AG04450 (cell line): ENCODE measurements at regions of chr20 and their contacts with region 1.

Region 1: DNA sequence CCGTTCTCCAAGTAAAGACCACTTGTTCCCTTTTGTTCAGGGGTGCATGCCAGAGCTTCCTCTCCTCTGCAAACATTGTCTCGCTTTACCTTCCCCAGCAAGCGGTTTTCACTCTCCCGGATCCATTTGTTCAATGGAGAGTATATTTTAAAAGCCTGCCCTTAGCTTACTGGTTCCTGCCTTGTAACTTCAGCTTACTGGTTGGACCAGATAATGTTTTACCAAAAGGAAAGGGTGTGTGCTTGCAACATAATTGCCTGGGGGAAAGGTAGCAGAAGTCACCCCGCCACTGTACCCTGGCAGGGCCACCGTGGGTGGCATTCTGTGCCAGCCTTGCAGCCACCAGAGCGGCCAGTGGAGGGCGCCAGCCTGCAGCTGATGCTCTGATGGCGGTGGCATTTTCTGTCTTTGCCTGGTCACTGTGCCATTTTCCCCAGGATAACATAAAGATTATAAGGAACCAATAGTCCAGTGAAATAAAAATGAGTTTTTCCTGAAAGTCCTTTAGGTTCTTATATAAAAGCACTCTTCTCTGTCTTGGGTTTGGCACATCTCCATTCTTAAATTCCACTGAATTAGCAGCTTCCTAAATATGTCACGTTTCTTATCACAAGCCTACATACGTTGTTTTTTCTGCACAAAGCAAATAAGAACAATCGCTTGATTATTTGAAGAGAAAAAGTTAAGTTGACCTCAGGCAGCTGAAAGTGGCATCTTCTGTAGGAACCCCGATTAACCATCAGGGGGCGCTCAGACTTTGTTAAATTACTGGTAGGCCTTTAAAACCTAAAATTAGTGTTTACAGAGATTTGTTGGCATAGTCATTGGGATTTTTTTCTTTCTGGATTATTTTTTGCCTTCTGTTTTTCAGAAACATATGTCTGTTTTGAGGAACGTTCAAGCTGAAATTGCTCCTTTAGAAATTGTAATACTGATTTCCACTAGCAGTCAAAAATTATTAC is 67.4 kb upstream of the XRN2 start:
- DNase-seq: peak; percentile 32
- H3K4me3 ChIP-seq: no peak overlapping the region
- H3K27ac ChIP-seq: no peak overlapping the region
- H3K27me3 ChIP-seq: no peaks in the 10 kb centered on the region
- CTCF ChIP-seq: peak; percentile 77

Region 2: DNA sequence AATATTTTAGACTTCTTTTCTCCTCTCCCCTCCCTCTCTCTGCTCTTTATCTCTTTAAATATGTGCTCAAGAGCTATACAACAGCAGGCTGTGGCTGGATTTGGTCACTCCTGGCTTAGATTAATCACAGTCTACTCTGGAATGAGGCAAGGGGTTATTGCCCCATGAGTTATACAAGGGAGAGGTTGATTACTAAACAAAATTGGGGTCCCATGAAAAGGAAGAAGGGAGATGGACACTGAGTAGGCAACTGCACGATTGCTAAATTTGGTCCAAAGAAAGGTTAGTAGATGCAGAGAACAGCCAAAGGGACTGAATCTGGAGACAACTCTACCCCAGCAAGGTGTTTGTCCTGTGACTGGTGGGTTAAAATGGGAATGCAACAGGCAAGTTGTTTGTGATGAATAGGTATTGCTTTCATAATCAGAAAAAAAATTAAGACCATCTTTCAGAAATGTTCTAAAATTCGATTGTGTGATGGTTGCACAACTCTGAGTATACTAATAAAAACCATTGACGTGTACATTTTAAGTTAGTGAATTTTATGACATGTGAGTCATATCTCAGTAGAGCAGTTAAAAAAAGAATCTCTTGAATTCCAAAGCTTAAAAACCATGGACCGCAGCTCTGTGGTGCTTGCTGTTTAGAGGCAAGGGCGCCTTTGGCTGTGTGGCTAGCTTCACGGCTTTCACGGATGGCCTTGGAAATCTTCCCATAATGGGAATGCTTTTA is 52.8 kb before region 1 on chr20:
- CTCF ChIA-PET with region 1: interaction called, 16 read pairs
- POLR2A ChIA-PET with region 1: no interaction called
- DNase-seq: peak; percentile 48
- H3K4me3 ChIP-seq: no peak overlapping the region
- H3K27ac ChIP-seq: peak overlapping the region; percentile 54
- H3K27me3 ChIP-seq: no peaks in the 10 kb centered on the region
- CTCF ChIP-seq: no peak

Region 3: GRCh38 chr20:21251278-21251677 is 15.5 kb after region 1 on chr20:
- CTCF ChIA-PET with region 1: interaction called, 31 read pairs
- POLR2A ChIA-PET with region 1: no interaction called
- DNase-seq: no peak
- H3K4me3 ChIP-seq: no peak overlapping the region
- H3K27ac ChIP-seq: no peak overlapping the region
- H3K27me3 ChIP-seq: no peaks in the 10 kb centered on the region
- CTCF ChIP-seq: no peak

Region 4: GRCh38 chr20:21326700-21327099 is 90.9 kb after region 1 on chr20:
- CTCF ChIA-PET with region 1: interaction called, 15 read pairs
- POLR2A ChIA-PET with region 1: no interaction called
- DNase-seq: no peak
- H3K4me3 ChIP-seq: no peak overlapping the region
- H3K27ac ChIP-seq: no peak overlapping the region
- H3K27me3 ChIP-seq: no peaks in the 10 kb centered on the region
- CTCF ChIP-seq: no peak

Region 5: GRCh38 chr20:21395666-21396598 is 160.2 kb after region 1 on chr20:
- CTCF ChIA-PET with region 1: interaction called, 33 read pairs
- POLR2A ChIA-PET with region 1: no interaction called
- DNase-seq: no peak
- H3K4me3 ChIP-seq: no peak overlapping the region
- H3K27ac ChIP-seq: no peak overlapping the region
- H3K27me3 ChIP-seq: peaks cover 68% of the 10 kb centered on the region
- CTCF ChIP-seq: no peak

Region 6: GRCh38 chr20:21505161-21505809 is 269.5 kb after region 1 on chr20:
- CTCF ChIA-PET with region 1: interaction called, 270 read pairs
- POLR2A ChIA-PET with region 1: interaction called, 3 read pairs
- DNase-seq: no peak
- H3K4me3 ChIP-seq: peak overlapping the region; percentile 48; the same call in 1 of the 2 replicates
- H3K27ac ChIP-seq: no peak overlapping the region
- H3K27me3 ChIP-seq: peaks cover 45% of the 10 kb centered on the region
- CTCF ChIP-seq: peak; percentile 97